Adrenal gland (tissue), 19 donors: ENCODE measurements at regions of chr12 and their contacts with region 1.

Region 1: GRCh38 chr12:48454667-48455066 is 17.7 kb upstream of the ANP32D start:
- DNase-seq: peak in 2 of 7 donors; percentile 16
- H3K4me3 ChIP-seq: no peak overlapping the region
- H3K27ac ChIP-seq: no peak overlapping the region
- H3K4me1 ChIP-seq: no peaks in the 10 kb centered on the region
- H3K27me3 ChIP-seq: no peaks in the 10 kb centered on the region
- CTCF ChIP-seq: peak; percentile 53 to 88 (median 78)
- POLR2A ChIP-seq: no peak

Region 2: DNA sequence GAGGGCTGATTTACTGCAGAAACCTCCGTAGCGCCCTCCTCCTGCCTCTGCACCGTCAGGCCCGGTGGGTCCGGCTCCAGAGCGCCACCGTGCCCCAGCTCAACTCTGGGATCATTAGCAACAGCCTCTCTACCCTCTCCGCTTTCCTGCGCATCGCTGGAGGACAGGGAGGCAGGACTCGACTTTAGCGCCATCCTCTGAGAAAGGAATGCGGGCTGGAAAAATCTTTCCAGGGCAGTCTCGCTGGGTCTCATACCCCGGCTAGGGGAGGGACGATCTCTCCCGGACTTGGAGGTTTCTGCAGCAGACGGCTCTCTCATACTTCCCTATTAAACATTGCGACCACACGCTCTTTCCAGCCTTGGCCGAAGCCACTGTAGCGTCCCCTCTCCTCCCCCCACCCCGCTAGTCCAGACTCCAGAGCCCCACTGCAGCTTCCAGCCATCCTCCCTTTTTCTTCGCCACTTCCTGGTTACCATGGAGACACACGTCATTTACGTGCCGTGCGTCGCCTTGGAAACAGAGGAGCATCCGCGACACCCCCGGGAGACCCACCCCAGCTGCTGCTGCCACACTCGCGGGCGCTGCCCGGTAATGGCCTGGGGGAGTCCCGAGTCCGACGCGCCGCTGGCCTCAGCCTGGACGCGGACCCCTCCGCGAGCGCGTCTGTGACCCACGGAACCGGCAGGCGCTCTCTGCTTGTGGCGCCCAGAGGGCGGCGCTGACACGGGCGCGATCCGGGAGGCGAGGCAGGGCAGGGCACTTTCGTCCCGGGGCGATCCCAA is 271.4 kb before region 1 on chr12 and contains the start of gene CCDC184:
- intact Hi-C with region 1: loop called (anchors 10 kb)
- DNase-seq: peak; percentile 73 to 90 (median 81)
- H3K4me3 ChIP-seq: peak within 1 kb of the TSS; percentile 50 to 62 (median 56)
- H3K27ac ChIP-seq: peak within 1 kb of the TSS in 3 of 5 donors; percentile 45 to 83 (median 58)
- H3K4me1 ChIP-seq: peaks cover 5 to 21% of the 10 kb centered on the region in 2 donors
- H3K27me3 ChIP-seq: no peaks in the 10 kb centered on the region
- CTCF ChIP-seq: peak; percentile 16 to 58 (median 42)
- POLR2A ChIP-seq: peak in 1 of 2 donors; percentile 31
- total RNA-seq, gene CCDC184: 1.4 to 12.8 (median 8.2) TPM

Region 3: GRCh38 chr12:48286665-48287064 is 168.0 kb before region 1 on chr12:
- intact Hi-C with region 1: loop called in 1 of 2 experiments (anchors 10 kb)
- DNase-seq: peak in 2 of 7 donors; percentile 19 to 39
- H3K4me3 ChIP-seq: no peak overlapping the region
- H3K27ac ChIP-seq: no peak overlapping the region
- H3K4me1 ChIP-seq: no peaks in the 10 kb centered on the region
- H3K27me3 ChIP-seq: no peaks in the 10 kb centered on the region
- CTCF ChIP-seq: peak in 4 of 6 experiments; percentile 38 to 47 (median 42)
- POLR2A ChIP-seq: no peak

Region 4: DNA sequence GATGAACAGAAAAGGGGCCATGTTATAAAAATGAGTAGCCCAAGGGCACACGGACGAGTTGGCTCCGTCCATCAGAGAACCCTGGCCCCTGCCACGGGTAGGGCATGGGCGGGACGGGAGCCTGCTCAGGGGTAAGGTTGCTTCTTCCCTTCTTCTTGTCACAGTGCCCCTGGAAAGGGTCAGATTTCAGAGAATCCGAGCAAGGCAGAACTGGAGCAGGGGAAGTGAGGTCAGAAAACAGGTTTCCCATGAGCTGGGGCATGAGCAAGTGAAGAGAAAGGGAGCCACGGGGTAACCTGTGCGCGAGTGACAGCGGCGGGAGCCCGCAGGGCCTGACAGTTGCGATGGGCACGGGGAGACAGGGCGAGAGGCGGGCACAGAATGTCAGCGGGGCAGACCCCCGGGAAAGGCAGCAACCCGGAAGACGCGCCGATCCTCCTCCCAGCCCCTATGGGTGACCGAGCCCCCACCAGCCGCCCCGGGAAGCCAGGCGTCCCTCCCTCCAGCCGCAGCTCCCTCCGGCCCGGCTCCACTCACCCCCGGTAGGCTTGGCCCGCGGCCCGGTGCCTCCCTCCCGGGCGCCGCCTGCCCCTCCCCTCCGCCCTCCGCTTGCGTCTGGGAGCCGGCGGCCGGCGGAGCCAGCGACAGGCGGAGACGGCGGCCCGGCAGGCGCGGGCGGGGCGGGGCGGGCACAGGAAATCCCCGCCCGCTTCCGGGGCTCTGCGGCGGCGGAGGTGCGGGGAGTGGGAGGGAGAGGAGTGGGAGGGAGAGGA is 104.2 kb before region 1 on chr12 and contains the start of gene ZNF641:
- intact Hi-C with region 1: loop called in 1 of 2 experiments (anchors 5 kb)
- DNase-seq: peak; percentile 81 to 91 (median 87)
- H3K4me3 ChIP-seq: peak within 1 kb of the TSS; percentile 44 to 99 (median 68)
- H3K27ac ChIP-seq: peak within 1 kb of the TSS; percentile 82 to 100 (median 95)
- H3K4me1 ChIP-seq: peaks cover 25 to 32% of the 10 kb centered on the region in 2 donors
- H3K27me3 ChIP-seq: no peaks in the 10 kb centered on the region
- CTCF ChIP-seq: no peak
- POLR2A ChIP-seq: peak in 1 of 2 donors; percentile 56
- total RNA-seq, gene ZNF641: 32.5 to 65.2 (median 46.6) TPM

Region 5: GRCh38 chr12:48957141-48958048 is 502.7 kb after region 1 on chr12 and contains the start of gene ARF3:
- intact Hi-C with region 1: no loop called
- DNase-seq: peak; percentile 93 to 97 (median 96)
- H3K4me3 ChIP-seq: peak within 1 kb of the TSS; percentile 78 to 96 (median 86)
- H3K27ac ChIP-seq: peak within 1 kb of the TSS; percentile 43 to 89 (median 78)
- H3K4me1 ChIP-seq: peaks cover 14 to 29% of the 10 kb centered on the region in 2 donors
- H3K27me3 ChIP-seq: no peaks in the 10 kb centered on the region
- CTCF ChIP-seq: no peak
- POLR2A ChIP-seq: peak; percentile 66 to 77
- total RNA-seq, gene ARF3: 73.1 to 237 (median 118) TPM